Activated CD4-positive, alpha-beta memory T cell treated with anti-CD3 and anti-CD28 coated beads for 36 hours (primary cell): ENCODE measurements at regions of chr3 and their contacts with region 1.

Region 1: DNA sequence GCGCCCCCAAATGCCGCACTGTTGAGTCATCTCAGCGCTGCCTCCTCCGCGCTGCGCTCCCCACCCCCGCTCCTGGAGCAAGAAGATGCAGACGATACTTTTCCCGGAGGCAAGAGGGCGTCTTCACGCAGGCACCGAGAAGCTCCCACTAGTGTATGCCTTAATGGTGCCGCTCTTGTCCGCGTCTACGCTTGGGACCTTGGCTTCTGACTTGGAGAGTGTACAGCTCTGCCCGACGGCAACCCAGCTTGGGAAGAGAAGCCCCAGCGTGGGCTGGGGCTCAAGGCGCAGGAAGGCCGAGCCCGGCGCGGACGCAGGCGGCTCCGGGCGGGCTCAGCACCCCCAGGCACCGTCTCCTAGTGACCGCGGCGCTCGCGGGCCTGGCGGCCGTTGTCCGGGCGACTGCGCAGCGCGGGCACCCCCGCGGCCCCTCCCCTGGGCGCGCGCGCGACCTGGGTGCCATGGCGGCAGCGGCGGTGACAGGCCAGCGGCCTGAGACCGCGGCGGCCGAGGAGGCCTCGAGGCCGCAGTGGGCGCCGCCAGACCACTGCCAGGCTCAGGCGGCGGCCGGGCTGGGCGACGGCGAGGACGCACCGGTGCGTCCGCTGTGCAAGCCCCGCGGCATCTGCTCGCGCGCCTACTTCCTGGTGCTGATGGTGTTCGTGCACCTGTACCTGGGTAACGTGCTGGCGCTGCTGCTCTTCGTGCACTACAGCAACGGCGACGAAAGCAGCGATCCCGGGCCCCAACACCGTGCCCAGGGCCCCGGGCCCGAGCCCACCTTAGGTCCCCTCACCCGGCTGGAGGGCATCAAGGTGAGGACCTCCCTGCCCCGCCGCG is at the start of gene P4HTM:
- DNase-seq: peak; percentile 88
- H3K4me3 Mint-ChIP-seq: peak within 1 kb of the TSS; percentile 95
- H3K27ac Mint-ChIP-seq: peak within 1 kb of the TSS; percentile 94
- H3K4me1 Mint-ChIP-seq: peaks cover 36% of the 10 kb centered on the region
- H3K27me3 Mint-ChIP-seq: no peaks in the 10 kb centered on the region
- total RNA-seq, gene P4HTM: 32.7 to 32.8 TPM

Region 2: GRCh38 chr3:48974076-48974864 is 15.7 kb before region 1 on chr3:
- CTCF ChIA-PET with region 1: interaction called, 18 read pairs
- POLR2A ChIA-PET with region 1: no interaction called
- intact Hi-C with region 1: no loop called
- DNase-seq: no peak
- H3K4me3 Mint-ChIP-seq: no peak overlapping the region
- H3K27ac Mint-ChIP-seq: peak overlapping the region; percentile 38
- H3K4me1 Mint-ChIP-seq: no peaks in the 10 kb centered on the region
- H3K27me3 Mint-ChIP-seq: no peaks in the 10 kb centered on the region

Region 3: GRCh38 chr3:49013755-49014628 is 24.0 kb after region 1 on chr3:
- CTCF ChIA-PET with region 1: interaction called, 43 read pairs
- POLR2A ChIA-PET with region 1: interaction called, 26 read pairs
- intact Hi-C with region 1: no loop called
- DNase-seq: peak; percentile 64
- H3K4me3 Mint-ChIP-seq: no peak overlapping the region
- H3K27ac Mint-ChIP-seq: no peak overlapping the region
- H3K4me1 Mint-ChIP-seq: peaks cover 23% of the 10 kb centered on the region
- H3K27me3 Mint-ChIP-seq: no peaks in the 10 kb centered on the region

Region 4: GRCh38 chr3:49028673-49029562 is 38.9 kb after region 1 on chr3 and contains the start of gene IMPDH2:
- CTCF ChIA-PET with region 1: interaction called, 88 read pairs
- POLR2A ChIA-PET with region 1: interaction called, 9 read pairs
- intact Hi-C with region 1: loop called (anchors 2 kb)
- DNase-seq: peak; percentile 95
- H3K4me3 Mint-ChIP-seq: peak within 1 kb of the TSS; percentile 86
- H3K27ac Mint-ChIP-seq: peak within 1 kb of the TSS; percentile 89
- H3K4me1 Mint-ChIP-seq: peaks cover 43% of the 10 kb centered on the region
- H3K27me3 Mint-ChIP-seq: no peaks in the 10 kb centered on the region
- total RNA-seq, gene IMPDH2: 430 to 454 TPM

Region 5: DNA sequence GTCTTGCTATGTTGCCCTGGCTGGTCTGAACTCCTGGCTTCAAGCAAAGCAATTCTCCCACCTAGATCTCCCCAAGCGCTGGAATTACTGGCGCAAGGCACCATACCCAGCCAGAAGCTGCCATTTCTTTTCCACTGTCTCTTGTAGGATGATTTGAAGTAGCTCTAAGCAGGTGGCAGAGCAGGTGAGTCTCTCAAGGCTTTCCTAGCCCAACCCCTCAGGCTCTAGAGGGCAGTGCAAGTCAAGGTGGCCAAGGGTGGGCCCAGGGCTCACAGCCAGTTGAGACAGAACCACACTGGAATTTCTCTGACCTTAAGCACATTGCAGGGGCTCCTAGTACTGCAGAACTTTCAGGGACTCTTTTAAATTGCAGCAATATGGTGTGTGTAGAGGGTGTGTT is 464.4 kb after region 1 on chr3:
- CTCF ChIA-PET with region 1: interaction called, 5 read pairs
- POLR2A ChIA-PET with region 1: no interaction called
- intact Hi-C with region 1: loop called (anchors 2 kb)
- DNase-seq: no peak
- H3K4me3 Mint-ChIP-seq: no peak overlapping the region
- H3K27ac Mint-ChIP-seq: no peak overlapping the region
- H3K4me1 Mint-ChIP-seq: no peaks in the 10 kb centered on the region
- H3K27me3 Mint-ChIP-seq: no peaks in the 10 kb centered on the region